BJ (cell line): ENCODE measurements at regions of chr19 and their contacts with region 1.

Region 1: GRCh38 chr19:311813-312261 is 20.6 kb upstream of the PLPP2 start:
- DNase-seq: no peak
- H3K4me3 ChIP-seq: no peak overlapping the region
- H3K27me3 ChIP-seq: no peaks in the 10 kb centered on the region
- CTCF ChIP-seq: no peak

Region 2: DNA sequence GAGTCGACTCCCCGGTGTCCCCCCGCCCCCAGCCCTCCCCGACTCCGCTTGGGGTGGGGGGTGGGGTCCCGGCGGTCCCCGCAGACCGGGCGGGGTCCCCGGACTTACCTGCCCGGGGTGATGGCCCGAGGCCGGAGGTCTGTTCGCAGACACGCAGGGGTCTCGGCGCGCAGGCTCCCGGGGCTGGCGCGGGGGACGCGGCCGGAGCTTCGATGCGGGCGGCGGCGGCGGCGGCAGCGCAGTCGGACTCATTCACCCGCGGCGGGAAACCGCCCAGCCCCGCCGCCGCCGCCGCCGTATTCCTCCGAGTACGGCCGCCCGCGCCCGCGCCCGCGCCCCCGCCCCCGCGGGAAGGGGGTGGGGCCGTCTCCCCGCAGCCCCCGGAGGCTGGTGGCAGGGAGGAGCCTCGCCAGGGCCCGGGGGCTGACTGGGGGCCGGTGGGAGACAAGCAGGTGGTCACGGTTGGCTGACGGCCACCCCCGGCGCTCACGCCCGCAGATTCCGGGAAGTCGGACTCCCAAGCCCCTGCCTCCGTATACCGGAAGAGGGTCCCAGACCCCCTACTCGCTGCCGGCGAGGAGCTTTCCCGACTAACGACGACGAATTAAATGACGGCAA is 97.2 kb after region 1 on chr19 and contains the start of gene C2CD4C:
- CTCF ChIA-PET with region 1: no interaction called
- POLR2A ChIA-PET with region 1: interaction called, 19 read pairs
- DNase-seq: no peak
- H3K4me3 ChIP-seq: peak within 1 kb of the TSS; percentile 30
- H3K27me3 ChIP-seq: peaks cover 7% of the 10 kb centered on the region
- CTCF ChIP-seq: no peak
- polyA plus RNA-seq, gene C2CD4C: 0.04 and 0.07 TPM in 2 replicates

Region 3: DNA sequence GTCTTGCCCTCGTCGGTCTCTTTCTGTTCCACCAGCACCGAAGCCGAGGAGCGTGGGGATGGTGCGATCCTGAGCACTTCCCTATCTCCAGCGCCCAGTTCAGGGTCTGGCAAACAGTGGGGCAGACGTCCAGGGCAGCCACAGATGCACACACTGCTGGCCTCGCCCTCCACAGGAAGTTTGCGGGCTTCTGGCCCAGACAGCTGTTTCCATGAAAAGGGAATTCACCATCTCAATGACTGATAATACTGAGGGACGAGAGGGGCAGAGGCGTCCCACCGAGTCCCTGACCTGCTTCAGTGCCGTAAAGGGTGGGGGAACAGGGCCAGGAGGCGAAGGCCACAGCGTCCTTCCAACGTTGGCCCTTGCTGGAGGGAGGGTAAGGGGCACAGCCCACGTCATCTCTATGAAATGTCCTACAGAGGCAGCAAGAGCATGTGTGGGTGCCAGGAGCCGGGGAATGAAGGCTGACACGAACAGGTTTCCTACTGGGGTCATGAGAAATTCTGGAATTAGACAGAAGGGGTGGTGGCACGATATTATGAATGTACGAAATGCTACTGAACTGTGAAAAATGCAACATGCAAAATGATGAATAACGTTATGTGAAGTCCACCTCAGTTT is 129.5 kb after region 1 on chr19:
- CTCF ChIA-PET with region 1: no interaction called
- POLR2A ChIA-PET with region 1: no interaction called
- DNase-seq: no peak
- H3K4me3 ChIP-seq: no peak overlapping the region
- H3K27me3 ChIP-seq: no peaks in the 10 kb centered on the region
- CTCF ChIP-seq: no peak